Caco-2 (cell line): ENCODE measurements at regions of chr3 and their contacts with region 1.

Region 1: GRCh38 chr3:178318941-178319816 is 217.1 kb upstream of the KCNMB2 start:
- DNase-seq: peak; percentile 9 to 38
- H3K4me3 ChIP-seq: no peak overlapping the region
- H3K4me3 Mint-ChIP-seq: no peak overlapping the region
- H3K27ac Mint-ChIP-seq: no peak overlapping the region
- H3K4me1 ChIP-seq: peaks cover 30% of the 10 kb centered on the region
- H3K4me1 Mint-ChIP-seq: peaks cover 7% of the 10 kb centered on the region
- H3K27me3 ChIP-seq: no peaks in the 10 kb centered on the region
- H3K27me3 Mint-ChIP-seq: no peaks in the 10 kb centered on the region
- CTCF ChIP-seq: no peak

Region 2: GRCh38 chr3:178003756-178004155 is 315.4 kb before region 1 on chr3:
- CTCF ChIA-PET with region 1: no interaction called
- POLR2A ChIA-PET with region 1: no interaction called
- intact Hi-C with region 1: no loop called
- DNase-seq: no peak
- H3K4me3 ChIP-seq: no peak overlapping the region
- H3K4me3 Mint-ChIP-seq: no peak overlapping the region
- H3K27ac Mint-ChIP-seq: no peak overlapping the region
- H3K4me1 ChIP-seq: no peaks in the 10 kb centered on the region
- H3K4me1 Mint-ChIP-seq: no peaks in the 10 kb centered on the region
- H3K27me3 ChIP-seq: no peaks in the 10 kb centered on the region
- H3K27me3 Mint-ChIP-seq: no peaks in the 10 kb centered on the region
- CTCF ChIP-seq: no peak

Region 3: GRCh38 chr3:178277605-178278004 is 41.6 kb before region 1 on chr3:
- CTCF ChIA-PET with region 1: no interaction called
- POLR2A ChIA-PET with region 1: no interaction called
- intact Hi-C with region 1: loop called (anchors 1 kb)
- DNase-seq: no peak
- H3K4me3 ChIP-seq: no peak overlapping the region
- H3K4me3 Mint-ChIP-seq: no peak overlapping the region
- H3K27ac Mint-ChIP-seq: no peak overlapping the region
- H3K4me1 ChIP-seq: peaks cover 17% of the 10 kb centered on the region
- H3K4me1 Mint-ChIP-seq: no peaks in the 10 kb centered on the region
- H3K27me3 ChIP-seq: no peaks in the 10 kb centered on the region
- H3K27me3 Mint-ChIP-seq: no peaks in the 10 kb centered on the region
- CTCF ChIP-seq: no peak

Region 4: DNA sequence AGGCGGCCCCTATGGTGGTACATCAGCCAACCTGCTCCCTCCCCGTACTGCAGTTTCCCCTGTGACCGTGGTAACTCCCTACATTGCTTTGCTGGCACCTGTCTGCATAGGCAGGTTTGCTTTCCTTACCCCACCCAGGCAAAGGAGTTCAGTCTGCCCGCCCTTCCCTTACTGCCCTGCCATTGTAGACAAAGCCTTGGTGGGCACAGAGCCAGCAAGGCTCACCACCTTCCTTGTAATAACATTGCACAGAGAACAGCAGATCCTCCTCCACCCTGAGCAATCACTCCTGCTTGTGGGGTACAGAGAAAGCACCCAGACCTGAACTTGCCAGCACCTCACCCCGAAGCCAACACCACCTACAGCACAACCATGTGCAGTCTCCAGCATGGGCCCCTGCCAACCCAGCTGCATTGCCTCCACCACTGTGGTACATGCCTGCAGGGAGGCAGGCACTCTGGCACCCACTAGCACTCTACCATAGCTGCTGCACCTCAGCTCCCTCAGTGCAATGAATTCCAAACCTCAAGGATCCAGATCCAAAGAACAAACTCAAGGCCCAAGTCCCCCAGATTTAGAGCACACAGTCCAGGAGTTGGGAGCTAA is 24.4 kb after region 1 on chr3:
- CTCF ChIA-PET with region 1: no interaction called
- POLR2A ChIA-PET with region 1: no interaction called
- intact Hi-C with region 1: no loop called
- DNase-seq: no peak
- H3K4me3 ChIP-seq: no peak overlapping the region
- H3K4me3 Mint-ChIP-seq: no peak overlapping the region
- H3K27ac Mint-ChIP-seq: peak overlapping the region; percentile 59
- H3K4me1 ChIP-seq: peaks cover 29% of the 10 kb centered on the region
- H3K4me1 Mint-ChIP-seq: peaks cover 23% of the 10 kb centered on the region
- H3K27me3 ChIP-seq: no peaks in the 10 kb centered on the region
- H3K27me3 Mint-ChIP-seq: no peaks in the 10 kb centered on the region
- CTCF ChIP-seq: no peak